Activated CD4-positive, alpha-beta memory T cell treated with anti-CD3 and anti-CD28 coated beads, Interleukin-2, amount 10 ng/mL, durations not matched to agents 7 days and 5 days (primary cell): ENCODE measurements at regions of chr11 and their contacts with region 1.

Region 1: GRCh38 chr11:2151500-2152257 is 9.3 kb downstream of the INS start:
- DNase-seq: peak; percentile 82
- H3K4me3 Mint-ChIP-seq: no peak overlapping the region
- H3K27ac Mint-ChIP-seq: no peak overlapping the region
- H3K4me1 Mint-ChIP-seq: peaks cover 6% of the 10 kb centered on the region
- H3K27me3 Mint-ChIP-seq: peaks cover 38% of the 10 kb centered on the region

Region 2: GRCh38 chr11:1652771-1653540 is 498.7 kb before region 1 on chr11:
- CTCF ChIA-PET with region 1: interaction called, 16 read pairs
- POLR2A ChIA-PET with region 1: no interaction called
- DNase-seq: peak; percentile 77
- H3K4me3 Mint-ChIP-seq: no peak overlapping the region
- H3K27ac Mint-ChIP-seq: no peak overlapping the region
- H3K4me1 Mint-ChIP-seq: no peaks in the 10 kb centered on the region
- H3K27me3 Mint-ChIP-seq: peaks cover 13% of the 10 kb centered on the region

Region 3: DNA sequence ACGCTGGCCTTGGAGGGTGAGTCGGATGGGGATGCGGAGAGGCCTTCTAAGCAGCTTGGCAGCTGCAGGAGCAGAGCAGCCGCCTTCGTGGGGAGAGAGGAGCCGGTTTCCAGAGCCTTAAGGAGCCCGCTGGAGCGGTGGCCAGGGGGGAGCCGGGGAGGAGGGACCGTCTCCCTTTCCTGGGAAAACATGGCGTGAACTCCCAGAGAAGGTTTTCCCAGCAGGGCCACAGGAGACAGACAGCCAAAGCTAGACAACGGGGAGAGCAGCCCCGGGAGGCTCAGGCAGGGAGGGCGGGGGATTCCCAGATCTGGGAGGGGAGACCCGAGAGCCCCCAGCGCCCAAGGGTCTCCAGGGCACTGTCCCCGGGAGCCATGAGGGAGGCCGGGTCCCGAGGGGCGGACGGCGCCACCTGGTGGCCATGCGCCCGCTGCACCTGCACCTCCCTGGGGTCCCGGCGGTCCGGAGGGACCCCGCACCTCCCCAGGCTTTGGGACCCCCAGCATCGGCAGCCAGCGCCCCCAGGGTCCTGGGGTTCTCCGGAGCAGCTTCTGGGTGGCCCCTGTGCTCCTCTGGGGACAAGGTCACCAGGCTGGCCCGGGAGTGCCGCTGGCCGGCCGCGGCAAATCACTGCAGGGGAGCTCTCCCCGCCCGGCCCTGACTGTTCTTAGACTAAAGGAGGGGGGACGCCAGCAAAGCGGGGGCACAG is 319.3 kb before region 1 on chr11:
- CTCF ChIA-PET with region 1: interaction called, 10 read pairs
- POLR2A ChIA-PET with region 1: no interaction called
- DNase-seq: peak; percentile 65
- H3K4me3 Mint-ChIP-seq: no peak overlapping the region
- H3K27ac Mint-ChIP-seq: no peak overlapping the region
- H3K4me1 Mint-ChIP-seq: no peaks in the 10 kb centered on the region
- H3K27me3 Mint-ChIP-seq: peaks cover 5% of the 10 kb centered on the region

Region 4: DNA sequence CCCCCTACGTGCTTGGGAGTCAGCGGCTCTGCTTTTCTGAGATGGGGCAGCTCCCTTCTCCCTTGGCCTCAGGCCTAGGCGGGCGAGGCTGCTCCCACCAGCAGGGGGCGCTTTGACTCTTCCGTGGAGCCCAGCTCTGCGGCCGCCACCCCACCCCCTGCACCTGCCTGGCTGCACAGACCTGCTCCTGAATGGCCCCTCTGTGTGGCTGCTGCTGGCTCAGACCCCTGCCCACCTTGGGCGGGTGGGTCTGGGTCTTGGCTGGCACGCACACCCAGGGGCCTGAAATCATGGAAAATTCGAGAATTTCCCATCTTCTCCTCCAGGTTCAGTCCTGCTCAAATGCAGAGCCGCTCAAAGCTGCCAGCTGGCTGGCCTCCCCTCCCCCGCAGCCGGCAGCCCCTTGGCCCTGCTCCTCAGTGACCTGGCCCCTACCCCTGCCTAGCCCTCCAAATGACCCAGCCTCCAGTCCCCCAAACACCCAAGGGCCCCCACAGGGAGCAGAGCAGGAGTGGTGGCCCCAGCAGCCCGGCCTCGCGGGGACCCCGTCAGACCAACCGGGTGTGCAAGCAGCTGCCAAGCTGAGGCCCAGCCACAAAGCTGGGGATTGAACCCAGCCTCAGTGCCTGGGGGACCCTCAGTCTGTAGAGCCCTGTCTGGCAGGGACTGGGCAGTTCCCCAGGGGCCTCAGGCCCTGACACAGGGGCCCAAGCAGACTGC is 269.0 kb before region 1 on chr11:
- CTCF ChIA-PET with region 1: interaction called, 15 read pairs
- POLR2A ChIA-PET with region 1: no interaction called
- DNase-seq: peak; percentile 75
- H3K4me3 Mint-ChIP-seq: no peak overlapping the region
- H3K27ac Mint-ChIP-seq: no peak overlapping the region
- H3K4me1 Mint-ChIP-seq: peaks cover 12% of the 10 kb centered on the region
- H3K27me3 Mint-ChIP-seq: no peaks in the 10 kb centered on the region

Region 5: DNA sequence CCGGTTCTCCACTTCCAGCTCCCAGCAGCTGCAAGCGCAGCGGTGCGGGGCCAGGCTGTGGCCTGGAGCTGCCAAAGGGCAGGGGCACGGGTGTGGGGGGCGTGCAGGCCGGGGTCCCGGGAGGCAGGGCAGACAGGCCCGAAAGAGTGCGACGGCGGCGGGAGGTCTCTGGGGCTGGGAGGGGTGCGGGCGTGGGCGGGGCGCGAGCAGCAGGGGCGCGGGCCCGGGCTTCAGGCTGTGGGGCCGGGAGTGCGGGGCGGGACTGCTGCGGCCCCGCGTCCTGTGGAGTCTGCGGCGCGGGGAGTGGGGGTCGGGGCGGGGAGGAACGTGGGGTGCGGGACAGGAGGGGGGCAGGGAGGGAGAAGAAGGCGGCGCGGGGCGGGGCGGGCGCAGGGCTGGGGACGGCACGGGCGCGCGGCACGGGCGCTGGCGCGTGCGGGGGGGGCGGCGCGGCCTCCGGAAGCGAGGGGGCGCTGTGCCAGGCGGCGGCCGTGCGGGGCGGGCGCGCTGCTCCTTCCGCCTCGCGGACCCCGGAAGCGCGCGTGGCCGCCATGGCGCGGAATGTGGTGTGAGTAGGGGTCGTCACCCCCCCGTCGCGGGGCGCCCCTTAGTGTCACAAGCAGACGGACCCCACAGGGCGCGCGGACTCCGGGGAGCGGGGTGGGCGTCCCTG is 204.7 kb before region 1 on chr11 and contains the start of gene MRPL23:
- CTCF ChIA-PET with region 1: interaction called, 11 read pairs
- POLR2A ChIA-PET with region 1: no interaction called
- DNase-seq: peak; percentile 18
- H3K4me3 Mint-ChIP-seq: no peak within 1 kb of the TSS
- H3K27ac Mint-ChIP-seq: no peak within 1 kb of the TSS
- H3K4me1 Mint-ChIP-seq: no peaks in the 10 kb centered on the region
- H3K27me3 Mint-ChIP-seq: no peaks in the 10 kb centered on the region
- total RNA-seq, gene MRPL23: 99.8 to 99.9 TPM

Region 6: DNA sequence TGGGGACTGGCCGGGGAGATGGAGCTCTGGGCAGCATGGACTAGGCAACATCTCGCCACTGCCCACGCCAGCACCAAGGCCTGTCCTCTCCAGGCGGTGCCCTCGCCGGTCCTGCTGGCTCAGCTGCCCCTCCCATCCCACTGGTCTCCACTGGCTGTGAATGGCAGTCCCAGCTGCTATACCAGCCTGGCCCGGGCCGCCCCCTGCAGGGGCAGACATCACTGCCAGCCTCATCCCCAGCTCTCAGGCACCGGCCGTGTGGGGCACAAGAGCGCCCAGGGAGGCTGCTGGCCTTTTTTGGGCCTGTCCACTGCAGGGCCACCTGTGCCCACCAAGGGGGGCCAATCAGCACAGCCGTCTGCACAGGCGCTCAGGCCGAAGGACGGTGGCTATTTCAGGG is 124.0 kb before region 1 on chr11:
- CTCF ChIA-PET with region 1: interaction called, 34 read pairs
- POLR2A ChIA-PET with region 1: no interaction called
- DNase-seq: no peak
- H3K4me3 Mint-ChIP-seq: no peak overlapping the region
- H3K27ac Mint-ChIP-seq: no peak overlapping the region
- H3K4me1 Mint-ChIP-seq: no peaks in the 10 kb centered on the region
- H3K27me3 Mint-ChIP-seq: no peaks in the 10 kb centered on the region

Region 7: GRCh38 chr11:2036863-2037486 is 114.7 kb before region 1 on chr11:
- CTCF ChIA-PET with region 1: interaction called, 220 read pairs
- POLR2A ChIA-PET with region 1: interaction called, 18 read pairs
- DNase-seq: no peak
- H3K4me3 Mint-ChIP-seq: no peak overlapping the region
- H3K27ac Mint-ChIP-seq: no peak overlapping the region
- H3K4me1 Mint-ChIP-seq: no peaks in the 10 kb centered on the region
- H3K27me3 Mint-ChIP-seq: no peaks in the 10 kb centered on the region

Region 8: DNA sequence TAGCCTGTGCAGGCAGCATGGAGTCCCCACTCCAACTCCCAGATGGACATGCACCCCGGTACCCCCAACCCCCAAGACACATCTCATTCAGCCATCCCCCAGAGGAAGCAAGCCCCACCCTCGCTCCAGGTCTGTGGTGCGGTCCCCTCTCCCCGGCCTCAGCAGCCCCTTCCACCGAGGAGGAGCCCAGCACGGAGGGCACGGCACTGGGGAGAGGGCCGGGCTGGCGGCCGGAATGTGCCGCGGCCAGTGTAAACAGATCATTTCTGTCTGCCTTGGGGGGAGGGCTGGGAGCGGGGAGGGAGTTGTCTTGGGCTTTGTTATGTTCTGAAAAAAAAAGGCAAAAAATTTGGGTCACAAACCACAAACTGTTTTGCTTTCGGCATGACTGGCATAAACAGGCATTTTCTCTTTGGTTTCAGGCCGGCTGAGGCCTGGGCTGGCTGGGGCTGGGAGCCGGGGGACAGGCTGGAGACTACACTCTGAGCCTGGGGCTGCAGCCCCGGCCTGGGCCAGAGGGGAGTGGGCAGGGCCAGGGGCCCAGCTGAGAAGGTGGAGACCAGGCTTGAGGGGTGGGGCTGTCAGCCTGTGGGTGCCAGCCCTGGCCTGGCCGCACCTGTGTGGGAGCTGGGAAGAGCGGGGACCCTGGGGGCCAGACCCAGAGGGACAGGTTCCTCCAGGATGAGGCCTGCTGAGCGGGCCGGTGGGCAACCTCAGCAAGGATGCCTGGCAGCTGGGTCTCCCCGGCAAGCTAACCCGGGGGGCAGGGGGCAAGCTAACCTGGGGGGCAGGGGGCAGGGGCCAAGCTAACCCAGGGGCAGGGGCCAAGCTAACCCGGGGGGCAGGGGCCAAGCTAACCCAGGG is 29.2 kb before region 1 on chr11:
- CTCF ChIA-PET with region 1: no interaction called
- POLR2A ChIA-PET with region 1: no interaction called
- DNase-seq: no peak
- H3K4me3 Mint-ChIP-seq: no peak overlapping the region
- H3K27ac Mint-ChIP-seq: no peak overlapping the region
- H3K4me1 Mint-ChIP-seq: no peaks in the 10 kb centered on the region
- H3K27me3 Mint-ChIP-seq: peaks cover 19% of the 10 kb centered on the region